ENCODE measurements at regions of chr7 and their contacts with region 1.

Region 1: DNA sequence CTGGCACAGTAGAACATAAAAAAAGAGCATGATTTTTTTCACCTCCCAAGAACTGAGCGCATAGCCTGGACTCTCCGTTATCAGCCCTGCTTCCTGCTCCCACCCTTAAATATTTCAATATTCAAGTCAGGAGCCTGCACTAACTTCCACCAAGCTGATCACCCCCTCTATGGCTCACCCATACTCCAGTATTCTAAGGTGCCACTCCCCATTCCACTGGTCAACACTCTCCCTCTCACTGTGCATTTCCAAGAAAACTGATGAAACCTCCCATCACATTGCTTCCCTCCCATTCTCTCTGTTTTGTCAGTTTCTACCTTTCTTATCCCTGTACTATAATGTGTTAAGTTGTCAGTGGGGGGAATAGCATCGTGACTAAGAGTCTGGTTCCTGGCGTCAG is 95.0 kb upstream of the C7orf33 start:
- DNase-seq: no peak

Region 2: GRCh38 chr7:148819697-148820360 is 324.2 kb after region 1 on chr7:
- intact Hi-C with region 1: no loop called
- DNase-seq: no peak

Region 3: DNA sequence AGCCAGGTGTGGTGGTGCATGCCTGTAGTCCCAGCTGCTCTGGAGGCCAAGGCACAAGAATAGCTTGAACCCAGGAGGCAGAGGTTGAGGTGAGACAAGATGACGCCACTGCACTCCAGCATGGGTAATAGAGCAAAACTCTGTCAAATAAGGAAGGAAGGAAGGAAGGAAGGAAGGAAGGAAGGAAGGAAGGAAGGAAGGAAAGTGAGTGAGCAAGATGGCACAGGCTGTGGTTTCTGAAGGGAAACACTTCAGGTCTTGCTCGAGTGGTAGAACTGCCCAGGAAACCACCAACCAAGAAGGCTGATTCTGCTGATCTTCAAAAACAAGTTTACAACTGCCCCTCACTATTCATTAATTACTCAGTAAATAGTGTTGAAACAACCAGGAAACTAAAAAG is 343.3 kb after region 1 on chr7:
- intact Hi-C with region 1: loop called in 1 of 2 experiments (anchors 5 kb)
- DNase-seq: no peak